Common myeloid progenitor, CD34-positive (primary cell): ENCODE measurements at regions of chr15 and their contacts with region 1.

Region 1: DNA sequence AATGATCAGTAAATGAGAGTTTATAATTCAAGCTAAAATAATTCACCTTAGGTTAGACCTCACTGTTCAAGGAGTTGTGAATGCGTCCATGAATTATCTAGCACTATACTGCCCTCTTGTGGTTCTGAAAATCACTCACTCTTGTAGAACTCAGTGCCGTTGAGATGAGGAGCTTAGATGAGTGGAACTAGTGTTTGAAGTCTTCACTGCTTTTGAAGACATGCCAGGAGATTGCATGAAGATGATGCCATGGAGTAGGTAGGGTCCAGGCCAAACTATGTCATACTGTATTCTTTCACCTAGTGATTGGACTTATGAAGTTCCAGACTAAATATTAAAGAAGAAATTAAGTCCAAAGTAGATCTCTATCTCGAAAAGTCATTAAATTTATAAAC is 28.8 kb downstream of the LYSMD4 start:
- DNase-seq: peak; percentile 83 to 92 (median 88)
- H3K4me3 ChIP-seq: no peak overlapping the region
- H3K27ac ChIP-seq: no peak overlapping the region
- H3K4me1 ChIP-seq: peaks cover 2 to 13% (median 8%) of the 10 kb centered on the region in 4 experiments
- H3K27me3 ChIP-seq: no peaks in the 10 kb centered on the region

Region 2: DNA sequence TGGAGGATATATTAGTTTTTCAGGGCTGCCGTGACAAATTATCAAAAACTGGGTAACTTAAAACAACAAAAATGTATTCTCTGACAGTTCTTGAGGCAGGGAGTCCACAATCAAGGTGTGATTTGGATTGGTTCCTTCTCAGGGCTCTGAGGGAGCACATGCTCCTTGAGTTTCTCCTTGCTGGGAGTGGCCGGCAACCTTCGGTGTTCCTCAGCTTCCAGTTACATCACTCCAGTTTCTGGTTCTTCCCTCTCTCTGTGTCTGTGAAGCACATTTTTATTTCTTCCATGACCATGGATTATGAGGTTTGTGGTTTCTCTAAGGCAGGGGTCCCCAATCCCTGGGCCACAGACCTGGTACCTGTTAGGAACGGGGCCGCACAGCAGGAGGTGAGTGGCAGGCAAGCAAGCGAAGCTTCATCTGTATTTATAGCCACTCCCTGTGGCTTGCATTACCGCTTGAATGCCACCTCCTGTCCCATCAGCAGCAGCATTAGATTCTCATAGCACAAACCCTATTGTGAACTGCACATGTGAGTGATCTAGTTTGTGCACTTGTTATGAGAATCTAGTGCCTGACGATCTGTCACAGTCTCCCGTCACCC is 428.8 kb before region 1 on chr15:
- CTCF ChIA-PET with region 1: interaction called, 67 read pairs
- POLR2A ChIA-PET with region 1: no interaction called
- DNase-seq: no peak
- H3K4me3 ChIP-seq: no peak overlapping the region
- H3K27ac ChIP-seq: no peak overlapping the region
- H3K4me1 ChIP-seq: peaks cover 0 to 5% (median 3%) of the 10 kb centered on the region in 4 experiments
- H3K27me3 ChIP-seq: no peaks in the 10 kb centered on the region

Region 3: DNA sequence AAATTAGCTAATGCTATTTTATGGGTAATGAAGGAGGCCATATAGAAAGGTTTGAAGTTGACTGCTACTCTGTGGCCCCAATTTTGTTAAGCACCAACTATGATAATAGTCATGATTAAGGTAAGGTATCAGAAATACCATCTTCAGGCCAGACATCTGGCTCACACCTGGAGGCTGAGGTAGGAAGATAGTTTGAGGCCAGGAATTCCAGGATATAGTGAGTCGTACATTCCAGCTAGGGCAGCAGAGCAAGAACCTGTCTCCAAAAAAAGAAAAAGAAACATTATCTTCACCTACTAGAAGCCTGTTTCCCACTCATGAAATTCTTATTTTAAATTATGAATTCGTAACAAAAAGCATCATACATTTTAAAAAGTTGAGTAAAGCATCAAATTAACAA is 388.8 kb before region 1 on chr15:
- CTCF ChIA-PET with region 1: no interaction called
- POLR2A ChIA-PET with region 1: no interaction called
- DNase-seq: no peak
- H3K4me3 ChIP-seq: no peak overlapping the region
- H3K27ac ChIP-seq: no peak overlapping the region
- H3K4me1 ChIP-seq: no peaks in the 10 kb centered on the region
- H3K27me3 ChIP-seq: no peaks in the 10 kb centered on the region

Region 4: DNA sequence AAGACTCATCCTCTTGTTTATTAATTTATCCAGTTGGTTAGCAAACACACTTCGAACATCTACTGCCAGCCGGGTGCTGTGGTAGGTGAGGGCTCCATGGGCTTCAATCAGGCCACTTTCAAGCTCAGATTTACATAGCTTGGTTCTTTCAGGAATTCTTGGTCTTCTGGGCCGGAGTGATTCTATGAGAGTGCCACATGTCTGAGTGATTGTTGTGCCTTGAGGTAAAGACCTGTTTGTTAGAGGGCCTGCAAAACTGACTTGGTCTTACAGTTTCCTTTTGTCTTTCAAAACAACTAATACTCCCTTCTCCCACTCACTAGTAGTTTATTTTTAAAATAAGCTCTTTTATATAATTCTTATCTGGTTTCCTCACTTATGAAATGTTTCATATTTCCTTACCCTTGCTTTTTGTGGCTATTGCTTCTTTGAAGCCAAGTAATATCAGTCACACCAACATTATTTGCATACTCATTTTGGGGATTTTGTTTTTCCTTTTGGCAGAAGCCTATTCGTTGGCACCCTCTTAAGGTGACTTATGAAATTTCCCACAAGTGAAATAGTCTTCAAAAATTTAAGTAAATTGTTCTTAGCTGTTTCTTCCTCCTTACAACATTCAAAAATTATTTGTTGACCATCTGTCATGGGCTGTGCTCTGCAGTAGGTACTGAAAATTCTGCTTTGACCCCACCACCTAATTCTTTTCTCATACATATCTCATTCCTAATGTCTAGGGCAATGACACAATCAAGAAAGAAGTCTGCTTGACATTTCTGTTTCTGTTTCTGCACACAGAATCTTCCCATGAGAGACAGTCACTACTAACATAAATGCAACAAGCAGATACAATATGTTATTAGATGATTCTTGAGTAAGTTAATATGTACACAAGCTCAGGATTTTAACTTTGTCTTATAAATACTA is 333.0 kb before region 1 on chr15:
- CTCF ChIA-PET with region 1: interaction called, 10 read pairs
- POLR2A ChIA-PET with region 1: no interaction called
- DNase-seq: peak; percentile 35 to 67 (median 62)
- H3K4me3 ChIP-seq: peak overlapping the region in 1 of 7 experiments; percentile 4
- H3K27ac ChIP-seq: peak overlapping the region in 1 of 2 experiments; percentile 65
- H3K4me1 ChIP-seq: peaks cover 11 to 19% (median 14%) of the 10 kb centered on the region in 4 experiments
- H3K27me3 ChIP-seq: no peaks in the 10 kb centered on the region

Region 5: DNA sequence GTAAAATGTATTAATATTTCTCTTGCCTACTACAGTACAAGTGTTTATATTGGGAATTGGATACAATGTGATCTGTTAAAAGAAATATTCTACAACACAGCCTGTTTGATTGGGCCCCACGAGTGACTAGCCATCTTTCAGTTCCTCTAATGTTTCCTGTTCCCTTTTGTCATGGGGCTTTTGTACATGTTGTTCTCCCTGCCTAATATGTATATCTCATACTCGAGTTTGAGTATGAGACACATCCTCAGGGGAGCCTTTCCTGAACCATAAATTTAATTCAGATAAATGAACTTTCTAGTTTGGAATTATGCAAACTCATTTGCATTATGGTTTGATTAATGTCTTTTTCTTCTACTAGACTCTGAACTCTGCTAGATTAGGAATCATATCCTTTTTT is 73.2 kb before region 1 on chr15:
- CTCF ChIA-PET with region 1: no interaction called
- POLR2A ChIA-PET with region 1: no interaction called
- DNase-seq: peak; percentile 31 to 83 (median 71)
- H3K4me3 ChIP-seq: no peak overlapping the region
- H3K27ac ChIP-seq: peak overlapping the region in 1 of 2 experiments; percentile 50
- H3K4me1 ChIP-seq: peaks cover 0 to 18% (median 14%) of the 10 kb centered on the region in 4 experiments
- H3K27me3 ChIP-seq: no peaks in the 10 kb centered on the region

Region 6: DNA sequence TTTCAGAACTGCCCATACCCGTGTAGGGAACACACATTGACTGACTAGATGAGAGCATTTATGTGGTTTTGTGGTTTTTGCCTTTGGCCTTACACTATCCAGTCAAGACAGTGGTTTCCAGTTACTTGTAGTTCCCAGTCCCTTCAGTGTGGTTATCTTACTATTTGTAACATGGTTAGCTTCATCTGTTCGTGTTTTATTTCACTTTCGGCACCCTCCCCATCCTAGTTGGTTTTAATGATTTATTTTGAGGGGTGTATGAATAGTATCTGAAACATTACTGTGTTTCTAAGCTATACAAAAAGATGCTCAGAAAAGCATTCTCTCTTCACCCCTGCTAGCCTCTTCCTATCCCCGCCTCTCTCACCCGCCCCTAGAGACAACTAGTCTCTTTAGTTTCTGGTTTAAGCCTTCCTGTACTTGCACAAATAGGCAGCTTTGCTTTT is 14.7 kb after region 1 on chr15:
- CTCF ChIA-PET with region 1: interaction called, 19 read pairs
- POLR2A ChIA-PET with region 1: no interaction called
- DNase-seq: peak; percentile 7 to 68 (median 55)
- H3K4me3 ChIP-seq: no peak overlapping the region
- H3K27ac ChIP-seq: no peak overlapping the region
- H3K4me1 ChIP-seq: peaks cover 0 to 19% (median 4%) of the 10 kb centered on the region in 4 experiments
- H3K27me3 ChIP-seq: no peaks in the 10 kb centered on the region

Region 7: DNA sequence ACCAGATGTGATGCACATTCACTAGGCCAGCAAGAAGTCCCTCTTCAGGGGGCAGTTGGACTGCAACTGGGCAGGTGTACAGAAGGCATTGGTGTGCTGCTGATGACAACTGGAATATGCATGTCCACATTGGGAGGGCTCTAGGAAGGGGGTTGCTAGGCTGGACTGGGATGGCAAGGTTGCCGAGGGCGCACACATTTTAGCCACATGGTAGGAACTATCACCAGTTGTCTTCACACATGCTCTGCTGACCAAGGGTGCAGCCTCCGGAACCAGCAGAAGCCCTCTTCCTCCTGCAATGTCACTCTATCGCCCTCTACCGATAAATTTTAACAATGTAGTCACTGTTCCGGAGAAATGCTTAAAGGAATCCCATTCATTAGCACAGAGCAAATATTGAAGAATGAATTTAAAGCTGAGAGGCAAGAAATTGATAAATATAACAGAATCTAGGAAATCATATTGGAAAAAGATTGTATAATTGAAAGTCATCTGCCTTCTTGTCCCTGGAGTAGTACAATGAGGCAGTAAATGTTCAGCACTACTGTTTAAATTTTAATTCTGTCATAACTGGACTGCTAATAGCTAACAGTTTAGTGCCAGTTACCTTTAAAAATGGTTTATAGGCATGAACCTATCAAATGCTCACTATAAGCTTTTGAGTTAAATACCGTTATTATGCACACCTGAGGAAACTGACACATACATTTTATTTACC is 51.4 kb after region 1 on chr15:
- CTCF ChIA-PET with region 1: interaction called, 22 read pairs
- POLR2A ChIA-PET with region 1: no interaction called
- DNase-seq: peak; percentile 57 to 74 (median 67)
- H3K4me3 ChIP-seq: no peak overlapping the region
- H3K27ac ChIP-seq: no peak overlapping the region
- H3K4me1 ChIP-seq: peaks cover 0 to 2% (median 1%) of the 10 kb centered on the region in 4 experiments
- H3K27me3 ChIP-seq: no peaks in the 10 kb centered on the region